Stomach (tissue), 19 donors: ENCODE measurements at regions of chr1 and their contacts with region 1.

Region 1: DNA sequence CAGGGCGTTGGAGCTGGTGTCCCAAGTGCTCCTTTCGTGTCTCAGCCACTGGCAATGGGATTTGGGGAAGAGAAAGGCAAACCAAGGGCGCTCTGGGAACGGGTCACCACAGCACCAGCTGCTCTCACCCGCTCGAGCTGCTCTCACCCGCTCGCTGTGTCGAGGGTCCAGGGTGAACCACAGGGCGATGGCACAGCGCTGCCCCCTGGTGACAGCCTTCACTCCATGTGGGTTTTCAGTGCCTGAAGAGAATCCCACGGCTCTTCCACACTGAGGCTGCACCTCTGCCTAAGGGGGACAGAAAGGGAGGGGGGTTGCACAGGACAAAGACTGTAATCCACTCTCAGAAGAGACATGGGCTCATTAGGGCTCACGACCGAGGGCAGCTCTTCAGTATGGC is 7.1 kb upstream of the CLDN19 start:
- DNase-seq: peak; percentile 39 to 80
- H3K4me3 ChIP-seq: no peak overlapping the region
- H3K27ac ChIP-seq: no peak overlapping the region
- H3K4me1 ChIP-seq: no peaks in the 10 kb centered on the region
- H3K27me3 ChIP-seq: no peaks in the 10 kb centered on the region
- CTCF ChIP-seq: peak in 5 of 7 experiments; percentile 32 to 68 (median 51)
- EP300 ChIP-seq: no peak
- POLR2A ChIP-seq: no peak

Region 2: DNA sequence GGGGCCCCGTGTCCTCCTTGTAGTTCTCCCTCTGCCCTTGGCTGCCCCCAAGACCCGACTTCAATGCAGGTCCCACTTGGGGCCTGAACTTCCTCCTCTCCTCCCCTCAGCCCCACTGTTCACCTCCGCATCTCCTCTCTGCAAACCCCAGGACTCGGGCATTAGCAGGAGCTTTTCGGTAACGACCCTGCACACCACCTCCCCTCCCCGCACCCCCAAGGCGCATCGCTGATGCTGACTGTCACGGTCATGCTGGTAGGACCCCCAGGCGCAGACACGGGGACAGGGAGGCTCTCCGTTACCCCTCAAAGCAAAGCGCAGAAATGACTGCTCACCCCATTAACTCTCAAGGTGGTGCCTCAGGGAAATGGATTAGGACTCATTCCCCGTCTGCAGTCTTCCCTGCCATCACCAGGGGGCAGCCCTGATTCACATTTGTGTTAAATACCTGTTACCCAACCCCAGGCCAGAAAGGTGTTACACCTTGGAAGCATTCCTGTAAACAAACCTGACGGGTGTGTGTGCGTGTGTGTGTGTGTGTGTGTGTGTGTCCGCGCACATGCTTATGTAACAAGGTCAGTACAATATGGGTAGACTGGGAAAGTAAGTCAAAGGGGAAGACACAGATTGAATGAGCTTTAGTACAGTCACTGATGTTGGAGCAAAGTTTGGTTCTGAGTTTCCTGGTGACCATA is 600.4 kb before region 1 on chr1:
- intact Hi-C with region 1: loop called (anchors 10 kb)
- DNase-seq: peak; percentile 93
- H3K4me3 ChIP-seq: no peak overlapping the region
- H3K27ac ChIP-seq: no peak overlapping the region
- H3K4me1 ChIP-seq: peaks cover 0 to 5% (median 0%) of the 10 kb centered on the region in 4 donors
- H3K27me3 ChIP-seq: peaks cover 0 to 68% (median 23%) of the 10 kb centered on the region in 3 donors
- CTCF ChIP-seq: peak; percentile 16 to 98 (median 83)
- EP300 ChIP-seq: no peak
- POLR2A ChIP-seq: no peak

Region 3: GRCh38 chr1:42576935-42577334 is 170.2 kb before region 1 on chr1:
- intact Hi-C with region 1: loop called (anchors 10 kb)
- DNase-seq: no peak
- H3K4me3 ChIP-seq: no peak overlapping the region
- H3K27ac ChIP-seq: no peak overlapping the region
- H3K4me1 ChIP-seq: no peaks in the 10 kb centered on the region
- H3K27me3 ChIP-seq: no peaks in the 10 kb centered on the region
- CTCF ChIP-seq: no peak
- EP300 ChIP-seq: no peak
- POLR2A ChIP-seq: no peak

Region 4: DNA sequence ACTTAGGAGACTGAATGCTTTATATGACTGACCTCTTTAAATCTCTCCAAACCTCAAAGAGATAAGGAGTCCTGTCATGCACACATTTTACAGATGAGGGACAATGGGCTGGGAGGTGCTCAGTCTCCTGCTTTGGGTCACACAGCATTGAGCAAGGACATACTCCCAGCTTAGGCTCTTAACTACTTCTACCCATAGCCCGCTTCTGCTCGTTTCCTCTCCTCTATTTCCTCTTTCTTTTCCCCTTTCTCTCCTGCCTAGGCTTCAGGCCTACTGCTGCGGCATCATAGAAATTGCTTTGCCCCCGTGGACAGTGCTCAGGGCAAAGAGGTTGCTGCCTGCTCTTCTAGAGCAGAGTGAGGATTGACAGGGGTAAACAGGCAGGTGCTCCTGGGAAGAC is 86.9 kb after region 1 on chr1:
- intact Hi-C with region 1: no loop called
- DNase-seq: no peak
- H3K4me3 ChIP-seq: no peak overlapping the region
- H3K27ac ChIP-seq: no peak overlapping the region
- H3K4me1 ChIP-seq: no peaks in the 10 kb centered on the region
- H3K27me3 ChIP-seq: no peaks in the 10 kb centered on the region
- CTCF ChIP-seq: no peak
- EP300 ChIP-seq: no peak
- POLR2A ChIP-seq: no peak